GM12878 (cell line): ENCODE measurements at regions of chr9 and their contacts with region 1.

Region 1: DNA sequence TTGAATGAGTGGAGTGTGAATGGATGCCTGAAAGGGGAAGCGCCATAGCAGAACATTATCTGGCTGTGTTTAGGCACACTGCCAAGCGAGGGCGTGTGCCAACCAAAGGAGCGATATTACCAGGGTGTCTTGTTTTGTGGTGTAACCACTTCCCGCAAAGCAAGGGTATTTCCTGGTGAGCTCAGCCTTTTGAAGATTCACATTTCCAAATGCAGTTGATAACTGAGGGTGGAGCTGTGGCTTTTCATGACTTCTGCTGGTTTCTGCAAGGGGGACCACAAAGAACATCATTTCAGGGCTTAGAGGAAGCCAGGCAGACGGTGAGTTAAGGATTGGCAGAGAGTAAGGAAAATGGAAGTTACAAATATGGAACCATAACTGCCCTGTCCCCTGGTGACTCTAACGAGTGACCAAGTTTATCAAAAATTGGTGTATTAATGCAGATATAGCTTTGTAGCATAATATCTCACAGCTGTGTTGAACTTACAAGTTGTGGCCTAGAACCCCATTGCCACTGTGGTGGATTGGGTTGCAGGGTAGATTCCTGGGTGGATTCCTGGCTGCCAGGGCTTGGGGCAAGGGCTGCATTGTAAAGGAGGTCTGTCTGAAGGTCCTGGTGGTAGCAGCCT is 71.4 kb downstream of the RALGPS1 start:
- DNase-seq: peak; percentile 92
- ATAC-seq: peak; percentile 91
- H3K4me3 ChIP-seq: no peak overlapping the region
- H3K27ac ChIP-seq: peak overlapping the region; percentile 29
- H3K4me1 ChIP-seq: peaks cover 14% of the 10 kb centered on the region
- H3K27me3 ChIP-seq: no peaks in the 10 kb centered on the region
- CTCF ChIP-seq: peak in 1 of 3 experiments; percentile 19; a peak in 3 of 6 replicates
- EP300 ChIP-seq: peak; percentile 77 to 94; a peak in 3 of 4 replicates
- POLR2A ChIP-seq: no peak
- RAD21 ChIP-seq: peak; percentile 50

Region 2: DNA sequence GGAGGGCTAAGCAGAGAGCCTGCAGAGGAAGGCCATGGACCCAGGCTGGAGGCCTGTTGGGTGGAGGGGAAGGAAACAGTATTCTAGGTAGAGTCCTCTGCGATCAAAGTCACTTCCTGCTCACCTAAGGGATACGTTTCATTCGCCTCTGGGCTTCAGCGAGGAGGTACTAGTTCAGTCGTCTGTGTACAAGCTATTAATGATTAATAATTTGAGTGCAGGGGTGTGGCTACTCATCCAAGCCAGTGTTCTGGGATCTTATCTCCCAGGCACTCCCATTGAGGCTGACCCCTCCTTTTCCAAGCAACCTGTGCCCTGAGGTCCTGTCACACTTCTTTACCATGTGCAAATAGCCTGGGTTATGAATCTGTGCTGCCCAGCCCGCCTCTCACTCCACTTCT is 46.2 kb before region 1 on chr9:
- CTCF ChIA-PET with region 1: interaction called, 10 read pairs
- POLR2A ChIA-PET with region 1: no interaction called
- RAD21 ChIA-PET with region 1: interaction called, 4 read pairs
- SMC1A ChIA-PET with region 1: interaction called, 8 read pairs
- in situ Hi-C with region 1: no loop called
- intact Hi-C with region 1: no loop called
- DNase-seq: no peak
- ATAC-seq: no peak
- H3K4me3 ChIP-seq: no peak overlapping the region
- H3K27ac ChIP-seq: no peak overlapping the region
- H3K4me1 ChIP-seq: no peaks in the 10 kb centered on the region
- H3K27me3 ChIP-seq: no peaks in the 10 kb centered on the region
- CTCF ChIP-seq: no peak
- EP300 ChIP-seq: no peak
- POLR2A ChIP-seq: no peak
- RAD21 ChIP-seq: no peak

Region 3: GRCh38 chr9:126999315-127000068 is 13.5 kb after region 1 on chr9:
- CTCF ChIA-PET with region 1: interaction called, 53 read pairs
- POLR2A ChIA-PET with region 1: interaction called, 27 read pairs
- RAD21 ChIA-PET with region 1: interaction called, 97 read pairs
- SMC1A ChIA-PET with region 1: interaction called, 110 read pairs
- in situ Hi-C with region 1: no loop called
- intact Hi-C with region 1: loop called (anchors 1 kb)
- DNase-seq: no peak
- ATAC-seq: peak; percentile 86
- H3K4me3 ChIP-seq: no peak overlapping the region
- H3K27ac ChIP-seq: peak overlapping the region; percentile 33; the same call in 1 of the 2 replicates
- H3K4me1 ChIP-seq: peaks cover 27% of the 10 kb centered on the region
- H3K27me3 ChIP-seq: no peaks in the 10 kb centered on the region
- CTCF ChIP-seq: no peak
- EP300 ChIP-seq: no peak
- POLR2A ChIP-seq: no peak
- RAD21 ChIP-seq: no peak

Region 4: DNA sequence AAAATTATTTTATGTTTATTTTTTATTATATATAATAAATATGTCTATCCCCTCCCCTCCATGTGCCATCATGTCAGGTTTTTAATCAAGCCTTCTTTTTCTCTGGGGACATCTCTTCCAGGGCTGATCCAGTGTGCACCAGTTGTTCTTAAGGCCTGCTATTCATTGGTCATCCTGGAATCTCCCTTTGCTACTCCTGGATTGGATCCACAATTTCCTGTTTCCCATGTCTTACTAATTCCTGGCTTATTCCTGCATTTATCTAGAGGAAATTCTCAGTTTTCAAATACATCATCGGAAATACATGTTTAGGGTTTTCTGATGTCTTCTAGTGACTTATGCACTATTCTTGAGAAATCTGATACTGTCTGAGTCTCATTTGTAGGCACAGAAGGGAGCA is 79.6 kb after region 1 on chr9:
- CTCF ChIA-PET with region 1: interaction called, 8 read pairs
- POLR2A ChIA-PET with region 1: no interaction called
- RAD21 ChIA-PET with region 1: interaction called, 42 read pairs
- SMC1A ChIA-PET with region 1: interaction called, 24 read pairs
- in situ Hi-C with region 1: no loop called
- intact Hi-C with region 1: no loop called
- DNase-seq: no peak
- ATAC-seq: no peak
- H3K4me3 ChIP-seq: no peak overlapping the region
- H3K27ac ChIP-seq: no peak overlapping the region
- H3K4me1 ChIP-seq: no peaks in the 10 kb centered on the region
- H3K27me3 ChIP-seq: no peaks in the 10 kb centered on the region
- CTCF ChIP-seq: no peak
- EP300 ChIP-seq: no peak
- POLR2A ChIP-seq: no peak
- RAD21 ChIP-seq: no peak

Region 5: GRCh38 chr9:127166651-127167524 is 180.9 kb after region 1 on chr9:
- CTCF ChIA-PET with region 1: interaction called, 29 read pairs
- POLR2A ChIA-PET with region 1: interaction called, 13 read pairs
- RAD21 ChIA-PET with region 1: interaction called, 111 read pairs
- SMC1A ChIA-PET with region 1: interaction called, 96 read pairs
- in situ Hi-C with region 1: no loop called
- intact Hi-C with region 1: loop called (anchors 5 kb)
- DNase-seq: peak; percentile 94
- ATAC-seq: peak; percentile 84
- H3K4me3 ChIP-seq: no peak overlapping the region
- H3K27ac ChIP-seq: peak overlapping the region; percentile 79
- H3K4me1 ChIP-seq: peaks cover 36% of the 10 kb centered on the region
- H3K27me3 ChIP-seq: no peaks in the 10 kb centered on the region
- CTCF ChIP-seq: no peak
- EP300 ChIP-seq: peak; percentile 81 to 94
- POLR2A ChIP-seq: peak; percentile 63
- RAD21 ChIP-seq: no peak

Region 6: GRCh38 chr9:127187231-127187956 is 201.4 kb after region 1 on chr9:
- CTCF ChIA-PET with region 1: interaction called, 8 read pairs
- POLR2A ChIA-PET with region 1: interaction called, 13 read pairs
- RAD21 ChIA-PET with region 1: interaction called, 23 read pairs
- SMC1A ChIA-PET with region 1: interaction called, 17 read pairs
- in situ Hi-C with region 1: no loop called
- intact Hi-C with region 1: no loop called
- DNase-seq: no peak
- ATAC-seq: no peak
- H3K4me3 ChIP-seq: no peak overlapping the region
- H3K27ac ChIP-seq: no peak overlapping the region
- H3K4me1 ChIP-seq: peaks cover 26% of the 10 kb centered on the region
- H3K27me3 ChIP-seq: no peaks in the 10 kb centered on the region
- CTCF ChIP-seq: no peak
- EP300 ChIP-seq: no peak
- POLR2A ChIP-seq: no peak
- RAD21 ChIP-seq: no peak